Heart left ventricle (tissue), 16 donors: ENCODE measurements at regions of chr2 and their contacts with region 1.

Region 1: DNA sequence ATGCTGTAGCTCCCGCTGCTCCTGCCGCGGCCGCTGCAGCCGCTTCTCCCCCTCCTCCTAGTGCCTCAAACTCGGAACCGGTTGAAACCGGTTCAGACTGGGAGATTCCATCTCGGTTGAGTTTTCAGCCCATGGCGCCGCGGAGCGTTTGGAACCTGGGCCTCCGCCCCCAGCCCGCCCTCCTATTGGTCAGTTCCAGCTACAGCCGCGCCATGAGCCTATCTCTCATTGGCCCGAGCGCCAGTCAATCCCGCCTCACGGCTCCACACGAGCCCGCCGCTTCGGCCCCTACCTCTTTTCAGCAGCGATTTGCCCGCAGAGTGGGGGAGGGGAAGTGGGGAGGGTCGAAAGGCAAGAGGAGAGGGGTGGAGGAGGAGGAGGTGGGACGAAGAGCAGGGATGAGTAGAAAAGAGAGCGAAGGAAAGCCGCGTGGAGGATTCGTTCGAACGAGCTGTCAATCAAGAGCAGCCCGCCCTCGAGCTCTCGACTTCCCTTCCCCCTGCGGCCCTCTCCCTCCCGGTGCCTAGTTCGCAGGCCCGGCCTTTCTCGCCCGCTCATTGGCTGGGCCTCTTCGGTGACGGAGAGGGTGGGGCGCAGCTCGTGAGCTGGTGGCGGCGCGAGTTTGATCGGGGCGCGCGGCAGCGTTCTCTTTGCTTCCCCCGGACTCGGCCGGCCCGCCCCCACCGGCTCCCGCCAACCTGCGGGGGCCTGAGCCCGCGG is at the start of gene XPO1:
- DNase-seq: peak; percentile 99 to 100 (median 100)
- ATAC-seq: peak; percentile 93 to 96 (median 96)
- H3K4me3 ChIP-seq: peak within 1 kb of the TSS; percentile 60 to 90 (median 78)
- H3K27ac ChIP-seq: peak within 1 kb of the TSS; percentile 83 to 98 (median 93)
- H3K4me1 ChIP-seq: peaks cover 4 to 35% (median 26%) of the 10 kb centered on the region in 12 donors
- H3K27me3 ChIP-seq: no peaks in the 10 kb centered on the region
- CTCF ChIP-seq: no peak
- POLR2A ChIP-seq: peak in 1 of 2 donors; percentile 68
- total RNA-seq, gene XPO1: 39.2 to 89.5 (median 74.6) TPM

Region 2: DNA sequence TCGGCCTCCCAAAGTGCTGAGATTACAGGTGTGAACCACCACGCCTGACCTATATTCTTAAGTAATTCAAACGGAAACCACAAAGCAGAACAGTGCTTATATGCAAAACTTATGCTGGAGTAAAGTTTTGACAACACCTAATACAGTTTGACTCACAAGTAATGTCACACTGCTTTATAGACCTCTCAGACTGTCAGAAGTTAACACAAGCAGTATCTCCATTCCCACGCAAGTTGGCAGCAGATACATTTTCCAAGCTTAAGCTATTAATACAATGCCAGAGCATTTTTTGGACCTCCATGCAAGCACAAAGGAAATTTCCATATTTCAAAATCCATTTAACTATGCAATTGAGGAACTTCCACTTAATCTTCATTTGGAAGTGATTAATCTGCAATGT is 493.7 kb before region 1 on chr2:
- intact Hi-C with region 1: no loop called
- DNase-seq: peak in 3 of 5 donors; percentile 21 to 45 (median 27)
- ATAC-seq: peak; percentile 84 to 89 (median 86)
- H3K4me3 ChIP-seq: no peak overlapping the region
- H3K27ac ChIP-seq: peak overlapping the region in 11 of 12 donors; percentile 17 to 74 (median 61)
- H3K4me1 ChIP-seq: peaks cover 0 to 49% (median 24%) of the 10 kb centered on the region in 12 donors
- H3K27me3 ChIP-seq: no peaks in the 10 kb centered on the region
- CTCF ChIP-seq: peak in 2 of 12 donors; percentile 4 to 19
- POLR2A ChIP-seq: no peak

Region 3: GRCh38 chr2:61470965-61471904 is 67.1 kb before region 1 on chr2 and contains the start of gene USP34:
- intact Hi-C with region 1: loop called in 5 of 10 experiments (anchors 1 to 5 kb)
- DNase-seq: peak; percentile 96 to 97 (median 97)
- ATAC-seq: peak; percentile 96 to 98 (median 97)
- H3K4me3 ChIP-seq: peak within 1 kb of the TSS; percentile 68 to 99 (median 90)
- H3K27ac ChIP-seq: peak within 1 kb of the TSS; percentile 95 to 100 (median 98)
- H3K4me1 ChIP-seq: peaks cover 2 to 41% (median 26%) of the 10 kb centered on the region in 12 donors
- H3K27me3 ChIP-seq: no peaks in the 10 kb centered on the region
- CTCF ChIP-seq: no peak
- POLR2A ChIP-seq: peak in 1 of 2 donors; percentile 85
- total RNA-seq, gene USP34: 48.5 to 82.8 (median 61.9) TPM

Region 4: DNA sequence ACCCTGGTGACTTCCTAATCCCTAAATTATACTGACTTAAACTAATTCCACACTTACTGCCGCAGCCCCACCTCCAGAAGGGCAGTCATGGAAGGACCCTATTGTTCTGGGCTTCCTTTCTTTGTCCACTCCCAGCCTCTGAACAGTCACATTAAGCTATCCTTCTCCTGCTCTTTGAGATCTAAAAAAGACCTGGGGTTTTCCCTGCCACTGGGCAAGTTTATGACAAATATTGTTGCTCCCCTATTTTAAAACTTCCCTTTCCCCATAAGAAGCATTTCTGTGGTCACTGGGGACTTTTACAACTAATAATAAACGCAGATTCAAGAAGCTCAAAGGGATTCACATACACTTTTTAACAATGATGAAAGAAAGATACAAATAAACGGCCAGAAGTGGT is 47.0 kb after region 1 on chr2:
- intact Hi-C with region 1: no loop called
- DNase-seq: peak in 2 of 5 donors; percentile 30 to 38
- ATAC-seq: peak in 3 of 4 donors; percentile 68 to 90 (median 70)
- H3K4me3 ChIP-seq: no peak overlapping the region
- H3K27ac ChIP-seq: peak overlapping the region in 8 of 12 donors; percentile 8 to 72 (median 63)
- H3K4me1 ChIP-seq: peaks cover 0 to 8% (median 0%) of the 10 kb centered on the region in 12 donors
- H3K27me3 ChIP-seq: no peaks in the 10 kb centered on the region
- CTCF ChIP-seq: no peak
- POLR2A ChIP-seq: no peak

Region 5: DNA sequence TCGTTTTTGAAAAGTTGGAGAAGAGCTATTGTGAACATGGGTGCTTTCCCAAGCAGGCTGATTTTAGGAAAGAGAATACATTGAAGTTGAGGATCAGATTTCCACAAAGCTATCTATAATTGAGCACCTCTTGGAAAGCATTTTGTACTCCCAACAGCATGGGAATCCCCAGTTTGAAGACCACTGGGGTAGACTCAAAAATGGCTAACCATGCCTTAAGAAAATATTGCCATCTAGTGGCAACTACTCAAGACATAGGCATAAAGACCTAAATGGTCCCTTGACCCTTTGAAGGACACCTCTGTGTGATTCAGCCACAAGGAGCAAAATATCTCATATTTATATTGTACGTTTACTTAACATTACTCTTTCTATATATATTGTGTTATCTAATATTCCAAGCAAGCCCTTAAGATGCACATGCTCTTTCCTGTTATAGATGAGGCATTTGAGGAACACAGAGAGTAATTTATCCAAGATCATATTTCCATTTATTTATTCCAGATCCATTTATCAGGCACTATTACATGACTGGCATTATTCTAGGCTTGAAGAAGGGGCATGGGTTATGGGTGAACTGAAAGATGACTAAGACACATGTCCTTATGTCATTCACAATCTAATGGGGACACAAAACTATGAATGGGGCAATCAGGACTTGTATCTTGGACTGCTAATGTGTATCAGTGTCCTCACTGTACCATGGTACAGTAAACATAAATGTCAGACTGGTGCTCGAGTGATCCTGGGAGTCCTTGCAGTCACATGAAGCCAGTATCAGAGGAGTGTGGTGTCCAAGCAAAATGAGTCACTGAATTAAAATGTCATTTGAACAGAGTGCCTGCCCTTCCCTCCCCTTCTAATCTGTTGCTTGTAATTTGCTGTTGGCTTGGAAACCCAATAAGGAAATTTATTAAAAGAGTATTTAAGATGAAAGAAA is 120.8 kb after region 1 on chr2:
- intact Hi-C with region 1: loop called in 4 of 10 experiments (anchors 1 to 10 kb)
- DNase-seq: peak in 3 of 5 donors; percentile 20 to 42 (median 31)
- ATAC-seq: peak; percentile 92 to 94 (median 94)
- H3K4me3 ChIP-seq: no peak overlapping the region
- H3K27ac ChIP-seq: peak overlapping the region; percentile 67 to 93 (median 84)
- H3K4me1 ChIP-seq: peaks cover 0 to 27% (median 16%) of the 10 kb centered on the region in 12 donors
- H3K27me3 ChIP-seq: no peaks in the 10 kb centered on the region
- CTCF ChIP-seq: peak; percentile 30 to 61 (median 43)
- POLR2A ChIP-seq: no peak

Region 6: GRCh38 chr2:61694312-61695274 is 156.2 kb after region 1 on chr2:
- intact Hi-C with region 1: loop called in 3 of 10 experiments (anchors 2 to 10 kb)
- DNase-seq: peak; percentile 95 to 98 (median 97)
- ATAC-seq: peak; percentile 99 to 100 (median 100)
- H3K4me3 ChIP-seq: peak overlapping the region; percentile 48 to 94 (median 82)
- H3K27ac ChIP-seq: peak overlapping the region; percentile 54 to 91 (median 84)
- H3K4me1 ChIP-seq: peaks cover 0 to 12% (median 5%) of the 10 kb centered on the region in 12 donors
- H3K27me3 ChIP-seq: no peaks in the 10 kb centered on the region
- CTCF ChIP-seq: peak; percentile 20 to 70 (median 50)
- POLR2A ChIP-seq: peak in 1 of 2 donors; percentile 65

Region 7: GRCh38 chr2:61764035-61764800 is 225.9 kb after region 1 on chr2:
- intact Hi-C with region 1: loop called in 8 of 10 experiments (anchors 1 to 10 kb)
- DNase-seq: peak; percentile 97 to 98 (median 98)
- ATAC-seq: peak; percentile 99 to 100 (median 99)
- H3K4me3 ChIP-seq: peak overlapping the region; percentile 28 to 82 (median 68)
- H3K27ac ChIP-seq: peak overlapping the region; percentile 92 to 99 (median 96)
- H3K4me1 ChIP-seq: peaks cover 0 to 13% (median 4%) of the 10 kb centered on the region in 12 donors
- H3K27me3 ChIP-seq: no peaks in the 10 kb centered on the region
- CTCF ChIP-seq: no peak
- POLR2A ChIP-seq: peak; percentile 38 to 81

Region 8: GRCh38 chr2:61854474-61855182 is 316.3 kb after region 1 on chr2:
- intact Hi-C with region 1: loop called in 3 of 10 experiments (anchors 1 to 5 kb)
- DNase-seq: peak; percentile 84 to 91 (median 89)
- ATAC-seq: peak; percentile 94 to 97 (median 96)
- H3K4me3 ChIP-seq: peak overlapping the region; percentile 55 to 88 (median 71)
- H3K27ac ChIP-seq: peak overlapping the region in 11 of 12 donors; percentile 62 to 87 (median 79)
- H3K4me1 ChIP-seq: peaks cover 0 to 17% (median 7%) of the 10 kb centered on the region in 12 donors
- H3K27me3 ChIP-seq: no peaks in the 10 kb centered on the region
- CTCF ChIP-seq: no peak
- POLR2A ChIP-seq: peak in 1 of 2 donors; percentile 15